Activated T-helper 2 cell treated with anti-CD3 and anti-CD28 coated beads, Interferon-gamma antibody, Interleukin-2, Interleukin-4, amounts not matched to agents 10 μg/mL and 5 μg/mL and 100 μg/mL, durations not matched to agents 14 hours and 24 hours and 36 hours (primary cell): ENCODE measurements at regions of chr18 and their contacts with region 1.

Region 1: DNA sequence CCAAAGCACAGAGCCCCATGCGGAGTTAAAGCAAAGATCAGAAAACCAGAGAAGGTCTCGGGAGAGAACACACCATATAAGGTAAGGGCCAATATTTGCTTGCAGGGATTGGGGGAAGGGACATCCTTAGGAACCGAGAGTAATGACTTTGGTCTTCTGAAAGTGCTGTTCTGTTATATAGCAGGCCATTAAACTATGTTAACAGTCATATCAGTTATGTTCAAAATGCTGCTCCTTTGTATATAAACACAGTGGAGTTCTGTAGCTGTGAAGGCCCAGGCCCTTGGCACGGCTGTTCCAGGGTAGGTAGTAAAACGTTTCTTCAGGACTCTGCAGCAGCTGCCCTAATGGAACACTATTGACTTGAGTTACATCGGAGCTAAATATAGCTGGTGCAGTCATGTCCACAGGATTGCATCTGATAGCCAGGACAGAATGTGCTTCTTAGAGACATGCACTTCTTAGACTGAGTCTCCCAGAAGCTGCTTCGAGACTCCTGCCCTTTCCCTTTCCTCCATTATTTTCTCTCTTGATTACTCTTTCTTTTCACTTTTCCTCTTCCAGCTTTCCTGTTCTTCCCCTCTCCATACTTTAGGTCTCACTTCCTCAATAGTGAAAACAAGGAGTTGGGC is 122.4 kb downstream of the SETBP1 start:
- DNase-seq: no peak
- H3K4me3 Mint-ChIP-seq: no peak overlapping the region
- H3K27ac Mint-ChIP-seq: no peak overlapping the region
- H3K4me1 Mint-ChIP-seq: peaks cover 61% of the 10 kb centered on the region
- H3K27me3 Mint-ChIP-seq: no peaks in the 10 kb centered on the region

Region 2: DNA sequence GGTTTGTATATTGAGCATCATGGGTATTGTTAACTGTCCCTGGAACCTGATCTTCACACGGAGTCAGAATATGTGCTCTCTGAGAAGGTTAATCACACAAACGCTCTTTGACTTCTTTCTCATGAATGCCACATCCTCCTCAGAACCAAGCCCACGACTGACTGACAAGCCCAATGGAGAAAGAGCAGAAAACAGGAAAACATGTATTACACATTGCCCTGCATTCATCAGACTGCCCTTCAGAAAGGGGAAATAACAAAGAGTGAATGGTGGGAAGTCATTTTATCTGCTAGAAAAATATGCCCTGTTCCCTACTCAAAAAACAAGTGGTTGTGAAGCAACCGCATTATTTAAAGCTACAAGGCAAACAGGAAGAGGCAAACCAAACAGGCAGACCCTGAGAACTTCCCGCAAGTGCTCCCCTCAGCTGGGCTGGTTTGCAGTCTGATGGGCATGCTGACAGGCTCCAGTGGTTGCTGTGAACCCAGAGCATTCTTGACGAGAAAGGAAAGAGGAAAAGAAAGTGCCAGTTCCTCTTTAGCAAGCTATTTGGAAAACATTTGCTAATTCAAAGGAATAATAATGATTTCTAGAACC is 295.3 kb before region 1 on chr18:
- intact Hi-C with region 1: loop called (anchors 10 kb)
- DNase-seq: no peak
- H3K4me3 Mint-ChIP-seq: no peak overlapping the region
- H3K27ac Mint-ChIP-seq: no peak overlapping the region
- H3K4me1 Mint-ChIP-seq: no peaks in the 10 kb centered on the region
- H3K27me3 Mint-ChIP-seq: no peaks in the 10 kb centered on the region

Region 3: DNA sequence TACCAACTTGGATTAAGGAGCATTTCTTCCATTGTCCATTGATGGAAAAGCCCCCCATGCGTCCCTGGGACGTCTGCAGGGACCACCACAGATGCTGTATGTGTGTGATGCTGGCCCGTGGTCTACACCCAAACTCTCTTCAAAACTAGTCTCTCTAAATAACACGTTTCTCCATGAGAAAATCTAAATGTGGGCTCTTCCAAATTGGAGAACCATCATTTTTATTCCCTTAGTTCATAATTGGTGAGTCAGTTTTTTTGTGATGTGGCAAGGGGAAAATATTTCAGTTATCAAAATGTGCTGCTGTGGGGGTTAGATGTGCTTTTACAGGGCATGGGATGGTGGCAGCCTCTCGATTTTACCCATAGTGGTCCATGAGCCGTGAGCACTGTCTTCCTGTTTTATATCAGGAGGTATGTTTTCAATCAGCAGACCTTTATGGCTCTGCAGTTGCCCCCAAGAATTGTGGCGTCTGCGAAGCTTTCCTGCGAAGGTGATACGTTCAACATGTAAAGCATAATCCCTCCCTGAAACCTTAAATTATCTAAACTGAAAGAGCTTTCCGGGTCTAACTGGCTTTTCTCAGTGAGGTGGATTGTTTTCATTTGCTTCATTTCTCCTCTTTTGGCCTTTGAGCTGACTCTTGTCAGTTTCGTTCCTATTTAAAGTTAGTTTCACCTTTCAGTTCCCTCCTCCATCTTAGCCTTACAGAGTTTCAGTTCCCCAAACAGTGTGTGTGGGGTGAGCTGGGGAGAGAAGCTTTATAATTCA is 44.1 kb before region 1 on chr18:
- intact Hi-C with region 1: loop called (anchors 1 kb)
- DNase-seq: peak; percentile 27
- H3K4me3 Mint-ChIP-seq: peak overlapping the region; percentile 53
- H3K27ac Mint-ChIP-seq: peak overlapping the region; percentile 97
- H3K4me1 Mint-ChIP-seq: peaks cover 36% of the 10 kb centered on the region
- H3K27me3 Mint-ChIP-seq: no peaks in the 10 kb centered on the region

Region 4: GRCh38 chr18:44819944-44820510 is 16.9 kb after region 1 on chr18:
- intact Hi-C with region 1: loop called (anchors 2 kb)
- DNase-seq: no peak
- H3K4me3 Mint-ChIP-seq: no peak overlapping the region
- H3K27ac Mint-ChIP-seq: no peak overlapping the region
- H3K4me1 Mint-ChIP-seq: peaks cover 29% of the 10 kb centered on the region
- H3K27me3 Mint-ChIP-seq: peaks cover 4% of the 10 kb centered on the region

Region 5: DNA sequence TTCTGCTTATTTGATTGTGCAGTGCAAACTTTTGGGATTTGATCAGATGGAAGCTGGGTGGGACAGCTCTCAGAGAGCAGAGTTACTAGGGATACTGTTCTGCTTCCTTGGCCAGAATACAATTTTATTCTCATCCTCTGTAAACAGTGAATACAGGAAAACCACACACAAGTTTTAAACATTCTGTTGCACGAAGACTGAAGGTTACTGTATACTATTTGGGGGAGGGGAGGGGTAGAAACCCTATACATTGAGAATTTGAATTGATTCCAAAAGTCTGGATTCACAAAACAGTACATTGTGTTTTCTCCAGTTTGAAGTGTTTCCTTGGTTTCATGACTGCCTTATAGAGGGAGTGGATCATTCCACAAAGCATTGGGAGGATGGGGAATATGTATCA is 27.4 kb after region 1 on chr18:
- intact Hi-C with region 1: no loop called
- DNase-seq: no peak
- H3K4me3 Mint-ChIP-seq: no peak overlapping the region
- H3K27ac Mint-ChIP-seq: no peak overlapping the region
- H3K4me1 Mint-ChIP-seq: peaks cover 18% of the 10 kb centered on the region
- H3K27me3 Mint-ChIP-seq: peaks cover 8% of the 10 kb centered on the region

Region 6: GRCh38 chr18:44895176-44895798 is 92.2 kb after region 1 on chr18:
- intact Hi-C with region 1: loop called (anchors 1 kb)
- DNase-seq: peak; percentile 10
- H3K4me3 Mint-ChIP-seq: no peak overlapping the region
- H3K27ac Mint-ChIP-seq: peak overlapping the region; percentile 20
- H3K4me1 Mint-ChIP-seq: peaks cover 49% of the 10 kb centered on the region
- H3K27me3 Mint-ChIP-seq: no peaks in the 10 kb centered on the region